Mammary epithelial cell (primary cell): ENCODE measurements at regions of chr4 and their contacts with region 1.

Region 1: GRCh38 chr4:38675146-38676121 is 11.4 kb downstream of the KLF3 start:
- DNase-seq: peak; percentile 68
- H3K4me3 ChIP-seq: no peak overlapping the region
- H3K27ac ChIP-seq: peak overlapping the region; percentile 82
- H3K4me1 ChIP-seq: peaks cover 52% of the 10 kb centered on the region
- H3K27me3 ChIP-seq: no peaks in the 10 kb centered on the region
- CTCF ChIP-seq: peak; percentile 89 to 94

Region 2: DNA sequence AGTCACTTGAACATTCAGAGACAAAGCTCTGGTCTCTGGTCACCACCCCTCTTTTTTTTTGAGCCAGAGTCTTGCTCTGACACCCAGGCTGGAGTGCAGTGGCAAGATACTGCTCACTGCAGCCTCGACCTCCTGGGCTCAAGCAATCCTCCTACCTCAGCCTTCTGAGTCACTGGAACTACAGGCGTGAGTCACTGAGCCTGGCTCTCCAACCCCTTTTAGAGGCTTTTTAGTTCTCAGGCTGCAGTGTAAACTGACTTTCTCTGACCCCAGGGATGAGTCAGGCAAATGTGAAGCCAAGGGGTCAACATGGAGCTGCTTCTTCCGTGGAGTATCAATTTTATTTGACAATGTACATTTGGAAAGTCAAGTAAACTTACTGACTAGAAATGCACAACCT is 486.0 kb before region 1 on chr4:
- CTCF ChIA-PET with region 1: interaction called, 4 read pairs
- dilution Hi-C with region 1: no loop called
- in situ Hi-C with region 1: loop called in 1 of 2 experiments (anchors 10 kb)
- intact Hi-C with region 1: loop called (anchors 2 kb)
- DNase-seq: peak; percentile 92
- H3K4me3 ChIP-seq: no peak overlapping the region
- H3K27ac ChIP-seq: peak overlapping the region; percentile 92
- H3K4me1 ChIP-seq: peaks cover 44% of the 10 kb centered on the region
- H3K27me3 ChIP-seq: no peaks in the 10 kb centered on the region
- CTCF ChIP-seq: no peak

Region 3: DNA sequence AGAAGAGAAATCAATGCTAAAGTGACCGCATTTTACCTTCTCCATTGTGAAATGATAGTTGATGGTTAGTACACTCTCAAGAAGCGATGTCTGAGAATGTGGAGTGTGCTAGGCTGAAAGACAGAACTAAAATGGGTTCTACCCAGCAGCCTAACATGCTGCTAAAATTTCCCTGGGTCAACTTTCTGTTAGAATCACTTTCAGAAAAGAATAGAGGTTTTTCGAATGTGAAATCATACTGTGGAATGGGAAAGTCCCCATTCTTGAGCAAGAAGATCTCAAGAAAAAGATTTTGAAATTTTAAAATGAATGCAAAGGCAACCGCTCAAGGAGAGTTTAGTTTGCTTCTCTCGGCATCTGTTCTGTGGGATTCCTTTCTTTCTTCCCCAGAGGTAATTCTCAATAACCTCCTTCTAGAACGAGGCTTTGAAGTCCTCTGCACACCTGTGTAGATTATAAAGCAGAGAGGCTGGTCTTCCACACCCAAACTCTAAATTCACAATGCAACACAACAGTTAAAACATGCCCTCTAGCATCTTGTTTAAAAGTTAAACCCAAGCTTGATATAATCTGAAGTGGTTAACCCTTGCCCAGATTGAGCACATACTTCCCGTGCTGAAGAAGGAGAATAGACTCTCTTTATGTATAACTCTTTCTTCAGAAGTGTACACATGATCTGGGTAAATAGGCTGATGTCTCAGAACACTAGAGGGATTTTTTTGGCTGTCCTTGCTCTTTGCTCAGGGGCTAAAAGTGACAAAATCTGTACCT is 220.2 kb before region 1 on chr4:
- CTCF ChIA-PET with region 1: no interaction called
- dilution Hi-C with region 1: no loop called
- in situ Hi-C with region 1: no loop called
- intact Hi-C with region 1: no loop called
- DNase-seq: no peak
- H3K4me3 ChIP-seq: no peak overlapping the region
- H3K27ac ChIP-seq: no peak overlapping the region
- H3K4me1 ChIP-seq: no peaks in the 10 kb centered on the region
- H3K27me3 ChIP-seq: no peaks in the 10 kb centered on the region
- CTCF ChIP-seq: no peak

Region 4: GRCh38 chr4:38519666-38520065 is 155.8 kb before region 1 on chr4:
- CTCF ChIA-PET with region 1: no interaction called
- dilution Hi-C with region 1: no loop called
- in situ Hi-C with region 1: no loop called
- intact Hi-C with region 1: loop called (anchors 2 kb)
- DNase-seq: no peak
- H3K4me3 ChIP-seq: no peak overlapping the region
- H3K27ac ChIP-seq: no peak overlapping the region
- H3K4me1 ChIP-seq: no peaks in the 10 kb centered on the region
- H3K27me3 ChIP-seq: no peaks in the 10 kb centered on the region
- CTCF ChIP-seq: no peak

Region 5: DNA sequence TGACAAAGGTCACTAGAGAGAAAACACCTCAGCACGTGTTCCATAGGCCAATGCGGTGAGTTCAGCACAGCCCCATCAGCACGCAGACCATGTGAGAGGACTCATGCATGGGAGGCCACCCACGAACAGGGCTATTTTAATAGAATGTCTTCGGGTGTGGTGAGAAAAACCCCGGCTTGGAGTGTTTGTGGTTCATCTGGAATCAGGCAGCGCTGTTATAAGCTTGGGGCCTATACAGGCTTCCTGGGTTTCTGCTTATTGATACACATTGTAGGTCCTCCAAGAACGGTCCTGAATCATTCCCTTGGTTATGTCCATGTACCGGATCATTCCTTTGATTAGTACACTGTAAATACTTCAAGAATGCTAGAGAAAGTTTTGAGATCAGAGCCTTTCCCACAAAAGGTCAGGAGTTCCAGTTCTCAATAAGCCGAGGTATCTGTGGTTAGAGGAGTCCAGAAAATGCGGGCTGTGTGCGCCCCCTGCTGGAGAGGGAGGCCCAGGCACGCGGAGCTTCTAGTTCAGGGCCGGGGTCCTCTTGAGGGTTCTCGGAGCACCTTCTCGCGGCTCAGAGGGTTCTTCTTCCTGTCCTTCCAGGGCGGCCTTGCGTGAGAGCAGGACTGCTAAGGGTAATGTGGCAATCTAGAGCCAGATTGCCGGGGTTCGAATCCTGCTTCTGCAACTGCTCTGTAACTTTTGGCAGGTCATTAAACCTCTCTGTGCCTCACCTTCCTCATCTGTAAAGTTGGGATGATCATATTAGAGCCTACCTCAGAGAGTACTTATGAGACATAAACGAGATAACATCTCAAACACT is 55.6 kb after region 1 on chr4:
- CTCF ChIA-PET with region 1: interaction called, 9 read pairs
- dilution Hi-C with region 1: no loop called
- in situ Hi-C with region 1: no loop called
- intact Hi-C with region 1: loop called (anchors 1 kb)
- DNase-seq: peak; percentile 86
- H3K4me3 ChIP-seq: no peak overlapping the region
- H3K27ac ChIP-seq: no peak overlapping the region
- H3K4me1 ChIP-seq: peaks cover 12% of the 10 kb centered on the region
- H3K27me3 ChIP-seq: no peaks in the 10 kb centered on the region
- CTCF ChIP-seq: peak; percentile 94 to 95